ENCODE measurements at regions of chr13 and their contacts with region 1.

Region 1: GRCh38 chr13:94362411-94362909 is 117.0 kb downstream of the DCT start:
- DNase-seq: peak; percentile 78
- H3K4me3 Mint-ChIP-seq: no peak overlapping the region
- H3K27ac Mint-ChIP-seq: no peak overlapping the region
- H3K4me1 Mint-ChIP-seq: peaks cover 4% of the 10 kb centered on the region
- H3K27me3 Mint-ChIP-seq: peaks cover 2% of the 10 kb centered on the region

Region 2: GRCh38 chr13:92896842-92897241 is 1465.6 kb before region 1 on chr13:
- CTCF ChIA-PET with region 1: no interaction called
- intact Hi-C with region 1: loop called (anchors 1 kb)
- DNase-seq: no peak
- H3K4me3 Mint-ChIP-seq: no peak overlapping the region
- H3K27ac Mint-ChIP-seq: no peak overlapping the region
- H3K4me1 Mint-ChIP-seq: no peaks in the 10 kb centered on the region
- H3K27me3 Mint-ChIP-seq: peaks cover 2% of the 10 kb centered on the region

Region 3: DNA sequence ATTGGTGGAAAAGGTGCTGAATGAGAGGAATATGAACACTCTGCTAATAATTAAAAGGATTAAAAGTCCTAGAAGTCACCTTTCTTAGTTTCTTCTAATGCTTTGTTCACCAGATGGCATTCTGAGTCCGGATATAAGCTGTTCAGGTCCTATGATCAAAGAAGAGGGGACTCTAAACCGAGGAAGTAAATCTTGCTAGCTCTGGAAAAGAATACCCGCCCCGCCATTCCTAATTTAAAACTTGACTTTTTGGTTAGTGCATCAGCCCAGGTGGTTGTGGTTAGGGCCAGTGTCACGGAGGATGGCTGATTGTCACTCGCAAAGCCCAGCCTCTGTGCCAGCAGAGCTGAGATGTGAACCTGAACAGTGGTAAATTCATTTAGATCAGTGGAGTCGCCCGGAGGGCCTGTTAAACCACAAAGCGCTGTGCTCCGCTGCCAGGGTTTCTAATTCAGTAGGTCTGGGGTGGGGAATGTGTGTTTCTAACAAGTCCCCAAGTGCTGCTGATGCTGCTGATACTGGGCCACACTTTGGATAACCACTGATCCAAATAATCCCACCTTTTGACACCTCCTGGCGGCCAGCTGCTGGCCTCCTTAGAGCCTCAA is 308.4 kb before region 1 on chr13:
- CTCF ChIA-PET with region 1: interaction called, 3 read pairs
- intact Hi-C with region 1: loop called (anchors 10 kb)
- DNase-seq: no peak
- H3K4me3 Mint-ChIP-seq: no peak overlapping the region
- H3K27ac Mint-ChIP-seq: no peak overlapping the region
- H3K4me1 Mint-ChIP-seq: no peaks in the 10 kb centered on the region
- H3K27me3 Mint-ChIP-seq: peaks cover 14% of the 10 kb centered on the region

Region 4: GRCh38 chr13:94192431-94192975 is 170.0 kb before region 1 on chr13:
- CTCF ChIA-PET with region 1: interaction called, 6 read pairs
- intact Hi-C with region 1: loop called (anchors 5 kb)
- DNase-seq: peak; percentile 32
- H3K4me3 Mint-ChIP-seq: no peak overlapping the region
- H3K27ac Mint-ChIP-seq: no peak overlapping the region
- H3K4me1 Mint-ChIP-seq: no peaks in the 10 kb centered on the region
- H3K27me3 Mint-ChIP-seq: no peaks in the 10 kb centered on the region

Region 5: DNA sequence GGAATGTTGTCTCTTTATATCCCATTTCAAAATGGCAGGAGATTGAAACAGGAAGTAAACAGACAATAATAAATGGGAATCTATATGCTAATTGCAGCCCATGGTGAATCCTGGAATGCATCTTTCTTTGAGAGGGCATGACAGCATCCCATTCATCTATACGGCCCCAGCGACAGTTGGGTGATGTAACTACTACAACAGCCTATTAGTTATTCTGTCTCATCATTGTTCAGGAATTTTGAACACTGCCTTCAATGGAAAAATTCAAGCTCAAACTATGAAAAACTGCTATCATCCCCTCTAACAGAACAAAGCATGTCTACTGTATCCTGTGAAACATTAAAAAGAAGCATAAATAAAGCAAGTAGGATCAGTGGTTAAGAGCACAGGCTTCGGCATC is 145.1 kb before region 1 on chr13:
- CTCF ChIA-PET with region 1: no interaction called
- intact Hi-C with region 1: no loop called
- DNase-seq: no peak
- H3K4me3 Mint-ChIP-seq: no peak overlapping the region
- H3K27ac Mint-ChIP-seq: no peak overlapping the region
- H3K4me1 Mint-ChIP-seq: no peaks in the 10 kb centered on the region
- H3K27me3 Mint-ChIP-seq: no peaks in the 10 kb centered on the region

Region 6: DNA sequence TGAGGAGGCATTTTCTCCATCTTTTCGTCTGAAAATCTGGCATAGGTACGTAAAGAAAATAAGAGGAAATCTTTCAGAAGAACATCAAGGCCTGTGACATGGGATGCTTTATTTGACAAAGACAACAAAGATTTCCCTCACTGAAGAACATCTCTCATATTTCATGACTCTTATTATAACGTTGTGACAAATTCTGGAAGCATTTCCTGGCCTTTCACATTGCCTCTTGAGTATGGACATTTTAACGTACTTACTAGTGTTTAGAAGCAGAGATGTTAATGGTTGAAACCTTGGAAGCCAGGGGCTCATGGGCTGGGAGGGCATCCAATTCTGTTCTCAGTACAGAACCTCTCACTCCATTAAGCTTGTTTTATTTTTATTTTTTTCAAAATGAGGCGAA is 93.8 kb before region 1 on chr13:
- CTCF ChIA-PET with region 1: interaction called, 4 read pairs
- intact Hi-C with region 1: loop called (anchors 5 kb)
- DNase-seq: no peak
- H3K4me3 Mint-ChIP-seq: no peak overlapping the region
- H3K27ac Mint-ChIP-seq: no peak overlapping the region
- H3K4me1 Mint-ChIP-seq: peaks cover 2% of the 10 kb centered on the region
- H3K27me3 Mint-ChIP-seq: no peaks in the 10 kb centered on the region

Region 7: GRCh38 chr13:94351292-94351990 is 11.0 kb before region 1 on chr13:
- CTCF ChIA-PET with region 1: interaction called, 11 read pairs
- intact Hi-C with region 1: no loop called
- DNase-seq: peak; percentile 38
- H3K4me3 Mint-ChIP-seq: no peak overlapping the region
- H3K27ac Mint-ChIP-seq: no peak overlapping the region
- H3K4me1 Mint-ChIP-seq: peaks cover 30% of the 10 kb centered on the region
- H3K27me3 Mint-ChIP-seq: peaks cover 4% of the 10 kb centered on the region

Region 8: GRCh38 chr13:94620286-94620896 is 257.9 kb after region 1 on chr13:
- CTCF ChIA-PET with region 1: interaction called, 8 read pairs
- intact Hi-C with region 1: loop called (anchors 2 kb)
- DNase-seq: peak; percentile 41
- H3K4me3 Mint-ChIP-seq: no peak overlapping the region
- H3K27ac Mint-ChIP-seq: no peak overlapping the region
- H3K4me1 Mint-ChIP-seq: peaks cover 7% of the 10 kb centered on the region
- H3K27me3 Mint-ChIP-seq: no peaks in the 10 kb centered on the region